GM10248 (cell line): ENCODE measurements at regions of chr4 and their contacts with region 1.

Region 1: GRCh38 chr4:145809483-145809852 is 129.2 kb downstream of the ZNF827 start:
- DNase-seq: no peak
- CTCF ChIP-seq: no peak

Region 2: DNA sequence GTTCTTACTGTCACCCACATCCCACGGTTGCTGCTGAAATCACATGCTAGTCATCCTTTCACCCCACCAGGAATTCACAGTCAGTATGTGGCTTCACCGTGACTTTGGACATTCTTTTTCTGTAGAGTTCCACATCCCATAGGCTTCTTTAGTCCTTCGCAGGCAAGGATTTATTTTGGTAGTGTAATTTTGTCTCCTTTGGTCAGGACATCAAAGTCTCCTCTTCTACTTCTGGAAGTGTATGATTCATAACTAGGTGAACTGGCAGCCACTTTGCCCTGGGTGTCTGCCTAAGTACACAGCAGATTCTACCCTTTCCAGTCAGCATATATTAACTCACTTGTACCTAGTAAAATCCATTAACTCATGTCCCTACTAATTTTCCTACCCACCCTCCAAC is 228.6 kb before region 1 on chr4:
- CTCF ChIA-PET with region 1: no interaction called
- POLR2A ChIA-PET with region 1: no interaction called
- DNase-seq: no peak
- CTCF ChIP-seq: no peak

Region 3: GRCh38 chr4:145819853-145820181 is 10.3 kb after region 1 on chr4:
- CTCF ChIA-PET with region 1: interaction called, 10 read pairs
- POLR2A ChIA-PET with region 1: no interaction called
- DNase-seq: no peak
- CTCF ChIP-seq: no peak